MCF 10A (cell line): ENCODE measurements at regions of chr1 and their contacts with region 1.

Region 1: GRCh38 chr1:184610876-184611595 is 143.6 kb downstream of the EDEM3 start:
- DNase-seq: no peak
- H3K4me3 Mint-ChIP-seq: no peak overlapping the region
- H3K27ac Mint-ChIP-seq: peak overlapping the region; percentile 95
- H3K4me1 Mint-ChIP-seq: peaks cover 23% of the 10 kb centered on the region
- H3K27me3 Mint-ChIP-seq: no peaks in the 10 kb centered on the region
- CTCF ChIP-seq: no peak

Region 2: GRCh38 chr1:183859831-183860230 is 751.2 kb before region 1 on chr1:
- CTCF ChIA-PET with region 1: no interaction called
- POLR2A ChIA-PET with region 1: no interaction called
- intact Hi-C with region 1: no loop called
- DNase-seq: no peak
- H3K4me3 Mint-ChIP-seq: no peak overlapping the region
- H3K27ac Mint-ChIP-seq: no peak overlapping the region
- H3K4me1 Mint-ChIP-seq: no peaks in the 10 kb centered on the region
- H3K27me3 Mint-ChIP-seq: no peaks in the 10 kb centered on the region
- CTCF ChIP-seq: no peak

Region 3: GRCh38 chr1:184075055-184076029 is 535.7 kb before region 1 on chr1:
- CTCF ChIA-PET with region 1: no interaction called
- POLR2A ChIA-PET with region 1: no interaction called
- intact Hi-C with region 1: no loop called
- DNase-seq: peak; percentile 72
- H3K4me3 Mint-ChIP-seq: no peak overlapping the region
- H3K27ac Mint-ChIP-seq: no peak overlapping the region
- H3K4me1 Mint-ChIP-seq: no peaks in the 10 kb centered on the region
- H3K27me3 Mint-ChIP-seq: no peaks in the 10 kb centered on the region
- CTCF ChIP-seq: peak; percentile 90

Region 4: DNA sequence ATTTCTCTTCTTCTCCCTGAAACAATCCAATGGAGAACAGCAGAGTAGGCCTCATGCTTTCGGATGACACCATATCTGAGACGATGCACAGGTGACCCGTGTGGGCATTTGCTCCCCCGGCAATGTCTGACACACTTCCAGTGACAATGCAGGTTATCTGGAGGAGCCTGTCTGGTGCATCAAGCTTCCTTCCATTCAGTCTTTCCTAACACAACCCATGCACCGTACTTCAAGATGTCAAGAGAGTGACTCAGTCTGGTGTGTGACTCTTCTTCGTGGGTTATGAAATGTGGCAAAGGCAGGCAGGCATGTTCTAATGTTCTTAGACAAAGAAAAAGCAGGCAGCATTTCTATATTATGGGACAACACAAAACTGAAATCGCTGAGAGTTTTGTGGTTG is 15.4 kb before region 1 on chr1:
- CTCF ChIA-PET with region 1: interaction called, 10 read pairs
- POLR2A ChIA-PET with region 1: interaction called, 26 read pairs
- intact Hi-C with region 1: no loop called
- DNase-seq: peak; percentile 85
- H3K4me3 Mint-ChIP-seq: no peak overlapping the region
- H3K27ac Mint-ChIP-seq: peak overlapping the region; percentile 3
- H3K4me1 Mint-ChIP-seq: peaks cover 30% of the 10 kb centered on the region
- H3K27me3 Mint-ChIP-seq: no peaks in the 10 kb centered on the region
- CTCF ChIP-seq: no peak

Region 5: GRCh38 chr1:184622136-184622823 is 11.2 kb after region 1 on chr1:
- CTCF ChIA-PET with region 1: interaction called, 4 read pairs
- POLR2A ChIA-PET with region 1: interaction called, 57 read pairs
- intact Hi-C with region 1: loop called (anchors 1 kb)
- DNase-seq: peak; percentile 98
- H3K4me3 Mint-ChIP-seq: peak overlapping the region; percentile 42
- H3K27ac Mint-ChIP-seq: peak overlapping the region; percentile 74
- H3K4me1 Mint-ChIP-seq: peaks cover 64% of the 10 kb centered on the region
- H3K27me3 Mint-ChIP-seq: no peaks in the 10 kb centered on the region
- CTCF ChIP-seq: no peak

Region 6: DNA sequence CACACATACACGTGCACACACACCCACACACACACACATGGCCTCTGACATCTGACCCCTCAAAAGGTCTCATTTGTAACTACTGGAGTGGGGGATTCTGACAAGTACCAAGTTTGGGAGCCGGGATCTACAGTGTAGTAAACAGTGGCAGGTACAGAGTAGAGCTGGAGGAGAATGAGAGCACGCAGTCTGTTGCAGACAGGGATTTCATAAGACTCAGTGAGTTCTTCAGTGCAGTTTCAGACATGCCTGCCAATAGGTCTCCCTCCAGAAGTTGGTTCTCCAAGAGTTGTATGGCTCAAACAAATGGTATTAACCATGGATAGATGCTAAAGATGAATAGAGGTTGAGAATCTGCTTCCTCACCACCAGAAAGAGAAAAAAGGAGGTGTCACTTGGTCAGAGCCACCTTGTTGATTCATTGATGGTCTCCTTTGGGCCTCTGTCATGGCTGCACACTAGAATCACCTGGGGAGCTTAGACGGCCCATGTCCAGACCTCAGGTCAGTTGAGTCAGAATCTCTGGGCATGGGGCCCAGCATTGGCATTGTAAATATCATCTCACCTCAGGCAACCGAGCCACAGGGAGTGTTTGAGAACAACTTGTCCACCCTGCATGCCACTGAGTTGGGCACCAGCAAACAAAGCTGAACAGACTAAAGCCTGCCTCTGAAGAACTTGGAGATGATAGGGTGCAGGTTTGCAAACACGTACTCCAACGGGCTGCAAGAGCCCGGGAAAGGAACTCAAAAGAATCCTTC is 21.6 kb after region 1 on chr1:
- CTCF ChIA-PET with region 1: interaction called, 3 read pairs
- POLR2A ChIA-PET with region 1: interaction called, 36 read pairs
- intact Hi-C with region 1: no loop called
- DNase-seq: peak; percentile 95
- H3K4me3 Mint-ChIP-seq: peak overlapping the region; percentile 4
- H3K27ac Mint-ChIP-seq: peak overlapping the region; percentile 86
- H3K4me1 Mint-ChIP-seq: peaks cover 64% of the 10 kb centered on the region
- H3K27me3 Mint-ChIP-seq: no peaks in the 10 kb centered on the region
- CTCF ChIP-seq: no peak

Region 7: GRCh38 chr1:184965944-184966860 is 355.2 kb after region 1 on chr1:
- CTCF ChIA-PET with region 1: no interaction called
- POLR2A ChIA-PET with region 1: no interaction called
- intact Hi-C with region 1: no loop called
- DNase-seq: no peak
- H3K4me3 Mint-ChIP-seq: no peak overlapping the region
- H3K27ac Mint-ChIP-seq: no peak overlapping the region
- H3K4me1 Mint-ChIP-seq: peaks cover 6% of the 10 kb centered on the region
- H3K27me3 Mint-ChIP-seq: peaks cover 71% of the 10 kb centered on the region
- CTCF ChIP-seq: no peak